Psoas muscle (tissue), 8 donors: ENCODE measurements at regions of chr1 and their contacts with region 1.

Region 1: GRCh38 chr1:32199717-32200072 is 700 bp upstream of the CCDC28B start:
- DNase-seq: peak; percentile 82 to 92
- ATAC-seq: peak; percentile 78 to 83 (median 82)
- H3K4me3 ChIP-seq: peak overlapping the region; percentile 88
- H3K27ac ChIP-seq: peak overlapping the region; percentile 94
- H3K4me1 ChIP-seq: peaks cover 54% of the 10 kb centered on the region
- H3K27me3 ChIP-seq: no peaks in the 10 kb centered on the region
- CTCF ChIP-seq: no peak

Region 2: GRCh38 chr1:32179443-32180185 is 20.1 kb before region 1 on chr1 and contains the start of gene TXLNA:
- intact Hi-C with region 1: loop called in 1 of 2 experiments (anchors 2 kb)
- DNase-seq: peak; percentile 96 to 97
- ATAC-seq: peak; percentile 90 to 95 (median 92)
- H3K4me3 ChIP-seq: peak within 1 kb of the TSS; percentile 81
- H3K27ac ChIP-seq: peak within 1 kb of the TSS; percentile 98
- H3K4me1 ChIP-seq: peaks cover 39% of the 10 kb centered on the region
- H3K27me3 ChIP-seq: no peaks in the 10 kb centered on the region
- CTCF ChIP-seq: no peak
- total RNA-seq, gene TXLNA: 12.9 to 21.5 (median 19.7) TPM

Region 3: DNA sequence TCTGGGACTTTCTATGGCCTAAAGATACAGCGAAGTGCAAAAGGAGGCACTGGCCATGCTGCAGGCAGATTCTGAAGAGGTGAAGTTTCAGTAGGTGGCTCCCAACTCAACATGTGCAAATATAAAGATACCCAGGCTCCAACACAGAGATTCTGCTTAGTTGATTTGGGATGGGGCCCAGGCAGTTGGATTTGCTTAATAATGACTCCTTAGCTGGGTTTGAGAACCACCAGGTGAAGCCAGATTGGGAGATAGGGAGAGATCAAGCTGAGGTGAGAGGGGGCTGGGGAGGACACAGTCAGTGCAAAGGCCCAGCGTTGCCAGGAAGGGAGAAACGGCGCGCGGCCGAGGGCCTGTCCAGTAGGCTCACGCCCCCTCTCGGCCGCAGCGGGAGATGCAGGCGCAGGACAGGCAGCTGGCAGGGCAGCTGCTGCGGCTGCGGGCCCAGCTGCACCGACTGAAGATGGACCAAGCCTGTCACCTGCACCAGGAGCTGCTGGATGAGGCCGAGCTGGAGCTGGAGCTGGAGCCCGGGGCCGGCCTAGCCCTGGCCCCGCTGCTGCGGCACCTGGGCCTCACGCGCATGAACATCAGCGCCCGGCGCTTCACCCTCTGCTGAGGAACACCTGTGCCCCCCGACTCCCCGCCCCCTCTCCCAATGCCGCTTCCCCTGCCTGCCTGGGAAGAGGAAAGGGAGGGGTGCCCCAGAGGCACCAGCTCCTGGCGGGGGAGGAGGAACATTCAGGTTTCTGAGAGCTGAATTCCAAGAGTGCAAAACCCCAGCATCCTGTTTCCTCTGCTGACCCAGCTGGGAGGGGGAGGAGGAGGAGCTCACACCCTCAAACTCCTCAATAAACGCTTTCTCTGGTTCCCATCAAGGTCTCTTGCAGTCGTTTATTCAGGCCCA is 48.5 kb after region 1 on chr1:
- intact Hi-C with region 1: no loop called
- DNase-seq: peak; percentile 89
- ATAC-seq: peak; percentile 75 to 86 (median 79)
- H3K4me3 ChIP-seq: no peak overlapping the region
- H3K27ac ChIP-seq: peak overlapping the region; percentile 53
- H3K4me1 ChIP-seq: peaks cover 28% of the 10 kb centered on the region
- H3K27me3 ChIP-seq: peaks cover 0 to 2% (median 0%) of the 10 kb centered on the region in 3 donors
- CTCF ChIP-seq: peak; percentile 65

Region 4: GRCh38 chr1:32361674-32362473 is 162.2 kb after region 1 on chr1:
- intact Hi-C with region 1: no loop called
- DNase-seq: peak; percentile 64 to 78
- ATAC-seq: peak; percentile 59 to 73 (median 71)
- H3K4me3 ChIP-seq: peak overlapping the region; percentile 59
- H3K27ac ChIP-seq: peak overlapping the region; percentile 13
- H3K4me1 ChIP-seq: no peaks in the 10 kb centered on the region
- H3K27me3 ChIP-seq: no peaks in the 10 kb centered on the region
- CTCF ChIP-seq: peak; percentile 31